PC-9 (cell line): ENCODE measurements at regions of chr18 and their contacts with region 1.

Region 1: DNA sequence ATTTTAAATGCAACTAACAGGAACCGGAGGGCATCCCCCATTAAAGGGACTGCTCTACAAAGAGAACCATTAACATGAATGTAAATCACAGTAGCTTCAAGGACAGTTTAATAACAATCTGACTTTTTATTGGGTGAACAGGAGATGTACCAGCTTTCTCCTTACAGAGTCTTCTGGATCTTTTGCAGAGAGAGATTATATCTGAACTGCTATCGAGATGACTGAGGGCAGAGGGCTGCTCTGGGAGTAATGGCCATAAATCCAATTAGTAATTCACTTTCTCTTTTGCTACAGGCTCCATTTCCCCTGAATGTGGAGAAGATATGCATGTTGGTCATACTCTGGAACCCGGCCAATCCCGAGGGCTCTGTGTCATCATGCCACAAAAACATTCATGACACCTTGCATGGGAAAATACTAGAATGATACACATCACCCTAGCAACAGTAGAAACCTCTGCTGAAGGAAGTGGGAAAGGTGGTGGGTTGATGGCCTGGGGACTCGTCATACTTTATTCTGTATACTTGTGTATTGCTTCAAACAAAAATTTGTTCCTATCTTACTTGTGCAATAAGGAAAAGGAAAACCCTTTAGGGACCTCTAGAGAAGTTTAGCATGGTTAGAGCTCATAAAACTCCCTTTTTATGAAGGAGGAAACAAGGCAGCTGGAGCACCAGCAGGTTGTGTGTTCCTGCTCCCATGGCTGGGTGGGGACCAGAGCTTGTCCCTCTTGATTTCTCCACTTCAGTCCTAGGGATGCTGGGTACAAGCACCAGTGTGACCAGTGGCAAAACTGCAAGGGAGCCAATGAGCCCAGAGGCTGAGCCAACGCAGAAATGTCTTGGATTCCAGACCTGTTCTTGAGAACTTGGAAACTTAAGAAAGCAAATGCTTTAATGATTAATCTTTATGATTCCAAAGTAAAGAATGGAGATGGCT is 26.0 kb downstream of the CTAGE1 start:
- DNase-seq: peak; percentile 34 to 60
- H3K4me3 ChIP-seq: no peak overlapping the region
- H3K27ac ChIP-seq: no peak overlapping the region
- H3K4me1 ChIP-seq: peaks cover 13% of the 10 kb centered on the region
- H3K27me3 ChIP-seq: no peaks in the 10 kb centered on the region
- CTCF ChIP-seq: no peak

Region 2: GRCh38 chr18:22465859-22466457 is 74.3 kb after region 1 on chr18:
- CTCF ChIA-PET with region 1: no interaction called
- POLR2A ChIA-PET with region 1: no interaction called
- intact Hi-C with region 1: loop called (anchors 5 kb)
- DNase-seq: peak; percentile 50 to 91
- H3K4me3 ChIP-seq: peak overlapping the region; percentile 52; the same call in 1 of the 2 replicates
- H3K27ac ChIP-seq: peak overlapping the region; percentile 100
- H3K4me1 ChIP-seq: peaks cover 39% of the 10 kb centered on the region
- H3K27me3 ChIP-seq: no peaks in the 10 kb centered on the region
- CTCF ChIP-seq: no peak